Activated CD4-positive, alpha-beta T cell treated with anti-CD3 and anti-CD28 coated beads for 36 hours (primary cell): ENCODE measurements at regions of chr6 and their contacts with region 1.

Region 1: GRCh38 chr6:10837995-10838793 is at the start of gene MAK:
- DNase-seq: peak; percentile 91
- ATAC-seq: peak; percentile 89
- H3K4me3 Mint-ChIP-seq: peak within 1 kb of the TSS; percentile 70
- H3K27ac Mint-ChIP-seq: peak within 1 kb of the TSS; percentile 96
- H3K4me1 Mint-ChIP-seq: peaks cover 22% of the 10 kb centered on the region
- H3K27me3 Mint-ChIP-seq: peaks cover 48% of the 10 kb centered on the region
- total RNA-seq, gene MAK: 0.42 to 0.43 TPM

Region 2: GRCh38 chr6:10404107-10404798 is 433.9 kb before region 1 on chr6:
- CTCF ChIA-PET with region 1: no interaction called
- POLR2A ChIA-PET with region 1: no interaction called
- intact Hi-C with region 1: loop called in 1 of 2 experiments (anchors 2 kb)
- DNase-seq: peak; percentile 95
- ATAC-seq: peak; percentile 95
- H3K4me3 Mint-ChIP-seq: peak overlapping the region; percentile 71
- H3K27ac Mint-ChIP-seq: peak overlapping the region; percentile 84
- H3K4me1 Mint-ChIP-seq: peaks cover 7% of the 10 kb centered on the region
- H3K27me3 Mint-ChIP-seq: peaks cover 60% of the 10 kb centered on the region

Region 3: DNA sequence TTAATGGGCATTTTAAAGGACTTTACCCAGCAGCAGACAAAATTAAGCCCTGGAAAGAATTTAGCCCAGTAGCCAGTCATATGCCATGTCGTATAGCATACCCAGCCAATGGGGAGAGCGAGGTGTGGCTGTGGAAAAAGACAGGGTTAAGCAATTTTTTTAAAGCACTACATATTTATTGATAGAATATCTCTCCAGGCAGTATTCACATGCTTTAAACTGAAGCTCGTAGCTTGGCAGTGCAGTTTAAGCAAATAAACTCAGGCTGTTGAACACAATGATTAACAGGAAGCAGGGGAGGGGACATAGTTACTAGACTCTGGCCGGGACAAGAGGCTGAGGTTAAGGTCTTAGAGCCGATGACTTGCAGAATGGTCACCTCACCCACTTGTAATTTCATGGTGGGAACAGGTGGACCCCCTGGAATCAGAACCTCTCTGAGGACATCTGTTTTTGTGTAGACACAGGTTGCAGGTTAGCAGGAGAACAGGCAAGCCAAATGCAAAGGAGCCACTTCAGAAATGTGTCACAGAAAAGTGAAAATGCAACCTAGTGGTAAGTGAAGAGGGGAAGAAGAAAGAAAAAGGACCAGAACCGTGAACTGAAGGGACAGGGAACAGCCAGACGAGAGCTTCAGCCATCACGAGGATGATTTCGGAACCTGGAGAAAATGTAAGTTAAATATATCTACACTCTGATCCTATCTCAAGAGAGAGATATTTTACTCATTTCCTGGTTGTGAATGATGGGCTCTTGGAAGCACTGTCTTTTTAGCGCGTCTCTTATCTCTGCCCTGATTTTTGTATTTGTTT is 309.8 kb before region 1 on chr6:
- CTCF ChIA-PET with region 1: no interaction called
- POLR2A ChIA-PET with region 1: no interaction called
- intact Hi-C with region 1: loop called in 1 of 2 experiments (anchors 2 kb)
- DNase-seq: peak; percentile 48
- ATAC-seq: peak; percentile 85
- H3K4me3 Mint-ChIP-seq: peak overlapping the region; percentile 76
- H3K27ac Mint-ChIP-seq: peak overlapping the region; percentile 86
- H3K4me1 Mint-ChIP-seq: peaks cover 58% of the 10 kb centered on the region
- H3K27me3 Mint-ChIP-seq: peaks cover 3% of the 10 kb centered on the region

Region 4: DNA sequence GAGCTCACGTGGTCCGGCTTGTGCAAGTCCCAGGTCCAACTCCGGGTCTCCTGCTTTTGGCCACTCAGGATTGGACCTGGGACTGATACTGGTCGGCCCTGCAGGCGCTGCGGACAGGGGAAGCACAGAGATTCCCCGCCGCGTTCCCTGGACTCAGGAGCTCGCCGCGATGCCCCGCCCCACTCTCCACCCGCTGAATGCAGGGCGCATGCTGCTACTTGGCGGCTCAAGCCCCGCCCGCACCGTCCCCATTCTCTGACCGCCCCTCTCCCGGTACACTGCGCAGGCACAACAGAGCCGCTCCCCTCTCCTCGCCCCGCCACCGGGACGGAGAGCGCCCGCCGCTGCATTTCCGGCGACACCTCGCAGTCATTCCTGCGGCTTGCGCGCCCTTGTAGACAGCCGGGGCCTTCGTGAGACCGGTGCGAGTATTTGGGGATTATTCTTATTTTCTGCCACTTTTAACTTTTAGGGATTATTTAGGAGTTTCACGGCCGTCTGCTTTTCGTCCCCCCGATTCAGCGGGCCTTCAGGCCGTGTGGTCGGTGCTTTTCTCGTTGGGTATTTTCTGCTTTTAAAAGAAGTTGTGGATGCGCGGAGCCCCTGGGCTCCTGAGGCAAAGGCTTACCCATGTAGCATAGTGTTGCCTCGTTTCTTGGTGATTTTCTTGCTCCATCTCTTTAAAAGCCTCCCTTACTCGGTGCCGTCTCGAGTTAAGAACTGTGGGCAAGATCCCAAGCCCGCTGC is 115.2 kb before region 1 on chr6 and contains the start of gene TMEM14C:
- CTCF ChIA-PET with region 1: no interaction called
- POLR2A ChIA-PET with region 1: interaction called, 4 read pairs
- intact Hi-C with region 1: loop called in 1 of 2 experiments (anchors 2 kb)
- DNase-seq: peak; percentile 94
- ATAC-seq: peak; percentile 95
- H3K4me3 Mint-ChIP-seq: peak within 1 kb of the TSS; percentile 92
- H3K27ac Mint-ChIP-seq: peak within 1 kb of the TSS; percentile 93
- H3K4me1 Mint-ChIP-seq: peaks cover 49% of the 10 kb centered on the region
- H3K27me3 Mint-ChIP-seq: no peaks in the 10 kb centered on the region
- total RNA-seq, gene TMEM14C: 67.6 to 81.7 TPM

Region 5: GRCh38 chr6:10747251-10747972 is 90.8 kb before region 1 on chr6 and contains the start of gene TMEM14B:
- CTCF ChIA-PET with region 1: interaction called, 4 read pairs
- POLR2A ChIA-PET with region 1: no interaction called
- intact Hi-C with region 1: loop called (anchors 1 kb)
- DNase-seq: peak; percentile 100
- ATAC-seq: peak; percentile 98
- H3K4me3 Mint-ChIP-seq: peak within 1 kb of the TSS; percentile 95
- H3K27ac Mint-ChIP-seq: peak within 1 kb of the TSS; percentile 95
- H3K4me1 Mint-ChIP-seq: peaks cover 40% of the 10 kb centered on the region
- H3K27me3 Mint-ChIP-seq: no peaks in the 10 kb centered on the region
- total RNA-seq, gene TMEM14B: 77.2 to 99.3 TPM

Region 6: GRCh38 chr6:10858908-10859307 is 20.7 kb after region 1 on chr6:
- CTCF ChIA-PET with region 1: no interaction called
- POLR2A ChIA-PET with region 1: no interaction called
- intact Hi-C with region 1: no loop called
- DNase-seq: no peak
- ATAC-seq: no peak
- H3K4me3 Mint-ChIP-seq: no peak overlapping the region
- H3K27ac Mint-ChIP-seq: no peak overlapping the region
- H3K4me1 Mint-ChIP-seq: no peaks in the 10 kb centered on the region
- H3K27me3 Mint-ChIP-seq: peaks cover 2% of the 10 kb centered on the region

Region 7: DNA sequence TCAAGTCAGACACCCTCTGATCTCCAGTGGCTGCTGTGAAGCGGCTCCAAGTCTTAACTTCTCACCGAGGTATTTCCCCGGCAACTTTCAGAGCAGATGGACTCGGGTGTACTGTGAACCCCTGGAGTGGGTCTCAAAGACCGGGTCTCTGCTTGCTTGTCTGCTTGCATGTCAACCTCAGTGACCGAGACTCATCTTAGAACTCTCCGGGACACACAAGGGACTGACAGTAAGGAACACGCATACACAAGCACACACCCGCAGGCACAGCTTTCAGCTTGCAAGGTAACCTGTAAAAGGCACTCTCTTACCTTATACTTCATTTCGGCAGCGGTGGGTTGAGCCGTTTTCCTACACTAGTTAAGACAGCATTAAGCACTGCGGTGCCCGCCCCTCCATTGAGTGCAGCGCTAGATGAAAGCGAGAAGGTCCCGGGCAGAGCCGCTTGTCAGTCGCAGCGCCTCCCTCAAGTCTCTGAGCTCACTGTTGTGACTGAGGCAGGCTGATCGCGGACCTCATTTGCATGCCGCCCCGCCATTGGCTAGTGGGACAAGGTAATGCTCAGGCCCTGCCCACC is 394.1 kb after region 1 on chr6 and contains the start of gene NEDD9:
- CTCF ChIA-PET with region 1: no interaction called
- POLR2A ChIA-PET with region 1: no interaction called
- intact Hi-C with region 1: loop called in 1 of 2 experiments (anchors 5 kb)
- DNase-seq: peak; percentile 97
- ATAC-seq: peak; percentile 96
- H3K4me3 Mint-ChIP-seq: peak within 1 kb of the TSS; percentile 81
- H3K27ac Mint-ChIP-seq: peak within 1 kb of the TSS; percentile 95
- H3K4me1 Mint-ChIP-seq: peaks cover 65% of the 10 kb centered on the region
- H3K27me3 Mint-ChIP-seq: no peaks in the 10 kb centered on the region
- total RNA-seq, gene NEDD9: 23.6 to 27.3 TPM

Region 8: GRCh38 chr6:11537229-11538051 is 699.2 kb after region 1 on chr6 and contains the start of gene TMEM170B:
- CTCF ChIA-PET with region 1: no interaction called
- POLR2A ChIA-PET with region 1: no interaction called
- intact Hi-C with region 1: loop called in 1 of 2 experiments (anchors 2 kb)
- DNase-seq: peak; percentile 95
- ATAC-seq: peak; percentile 96
- H3K4me3 Mint-ChIP-seq: peak within 1 kb of the TSS; percentile 76
- H3K27ac Mint-ChIP-seq: no peak within 1 kb of the TSS
- H3K4me1 Mint-ChIP-seq: peaks cover 5% of the 10 kb centered on the region
- H3K27me3 Mint-ChIP-seq: peaks cover 8% of the 10 kb centered on the region
- total RNA-seq, gene TMEM170B: 0.98 to 1.3 TPM